ENCODE measurements at regions of chr4 and their contacts with region 1.

Region 1: DNA sequence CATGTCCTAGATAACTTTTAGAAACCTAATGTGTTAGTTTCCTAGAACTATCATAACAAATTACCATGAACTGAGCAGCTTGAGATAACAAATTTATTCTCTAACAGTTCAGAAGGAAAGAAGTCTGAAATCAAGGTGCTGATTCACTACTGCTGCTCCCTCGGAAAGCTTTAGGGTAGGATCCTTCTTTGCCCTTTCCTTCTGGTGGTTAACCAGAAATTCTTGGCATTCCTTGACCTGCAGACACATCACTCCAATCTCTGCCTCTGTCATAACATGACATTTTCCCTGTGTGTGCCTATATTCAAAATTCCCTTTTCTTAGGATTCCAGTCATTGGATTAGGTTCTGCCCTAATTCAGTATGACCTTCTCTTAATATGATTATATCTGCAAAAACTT is 175.5 kb downstream of the SNCA start:
- DNase-seq: no peak
- ATAC-seq: no peak

Region 2: GRCh38 chr4:89519771-89520320 is 141.6 kb before region 1 on chr4:
- intact Hi-C with region 1: no loop called
- DNase-seq: no peak
- ATAC-seq: no peak

Region 3: DNA sequence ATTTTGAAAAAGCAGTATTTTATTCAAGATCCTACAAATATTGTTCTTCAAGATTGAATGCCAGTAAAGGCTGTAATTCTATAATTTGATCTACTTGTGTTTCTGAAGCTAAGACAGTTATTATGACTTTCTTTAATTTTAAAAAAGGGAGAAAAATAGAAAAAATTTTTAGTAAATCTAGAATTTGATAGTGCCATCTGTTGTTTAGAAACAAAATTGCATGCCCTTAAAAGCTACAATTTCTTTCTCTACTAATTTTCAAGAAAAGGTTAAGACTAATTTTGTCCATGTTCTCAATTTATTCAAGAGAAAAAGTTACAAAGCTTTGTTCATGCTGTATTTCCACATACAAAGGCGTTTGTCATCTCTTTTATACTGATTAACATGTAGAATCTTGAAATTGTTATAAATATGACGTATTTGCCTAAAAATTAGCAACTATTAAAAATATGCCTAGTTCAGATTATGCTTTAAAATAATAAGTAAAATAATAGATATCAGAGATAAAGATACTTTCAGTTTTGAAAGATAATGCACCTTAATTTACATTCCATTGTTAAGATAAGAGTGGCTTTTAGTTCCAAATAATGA is 207.6 kb after region 1 on chr4:
- intact Hi-C with region 1: loop called (anchors 10 kb)
- DNase-seq: no peak
- ATAC-seq: no peak